Mammary epithelial cell (primary cell): ENCODE measurements at regions of chr6 and their contacts with region 1.

Region 1: DNA sequence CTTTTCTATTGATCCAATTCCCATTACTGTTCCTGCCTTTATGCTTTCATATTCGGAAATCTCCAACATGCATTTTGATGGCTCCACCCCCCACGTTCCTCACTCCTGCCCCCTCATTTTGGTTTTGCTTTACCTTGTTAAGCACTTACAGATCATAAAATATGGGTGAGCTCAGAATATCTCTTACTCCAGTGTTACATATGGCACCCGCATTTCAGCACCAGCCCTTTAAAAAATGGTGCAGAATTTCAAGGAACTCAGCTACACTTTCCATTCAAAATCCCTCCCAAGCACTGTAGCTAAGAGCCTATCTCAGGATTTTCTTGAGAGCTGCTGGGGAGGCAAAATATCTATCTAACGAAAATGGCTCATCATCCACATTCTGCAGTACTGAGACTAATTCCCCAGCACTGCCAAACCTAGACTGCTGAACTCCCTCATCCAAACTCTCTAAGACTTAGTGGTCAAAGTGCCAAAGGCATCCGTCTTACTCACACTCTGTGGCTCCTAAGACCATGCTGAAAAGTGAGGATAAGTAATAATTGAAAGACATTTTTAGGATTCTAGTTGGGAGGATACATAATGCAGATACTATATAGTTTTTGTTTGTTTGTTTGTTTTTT is 7.8 kb downstream of the SGK1 start:
- DNase-seq: no peak
- H3K4me3 ChIP-seq: no peak overlapping the region
- H3K27ac ChIP-seq: no peak overlapping the region
- H3K4me1 ChIP-seq: no peaks in the 10 kb centered on the region
- H3K27me3 ChIP-seq: no peaks in the 10 kb centered on the region
- CTCF ChIP-seq: no peak

Region 2: GRCh38 chr6:134347916-134348805 is 38.1 kb after region 1 on chr6:
- CTCF ChIA-PET with region 1: no interaction called
- dilution Hi-C with region 1: loop called (anchors 5 kb)
- in situ Hi-C with region 1: no loop called
- intact Hi-C with region 1: no loop called
- DNase-seq: peak; percentile 56
- H3K4me3 ChIP-seq: no peak overlapping the region
- H3K27ac ChIP-seq: no peak overlapping the region
- H3K4me1 ChIP-seq: no peaks in the 10 kb centered on the region
- H3K27me3 ChIP-seq: no peaks in the 10 kb centered on the region
- CTCF ChIP-seq: no peak